B cell (primary cell): ENCODE measurements at regions of chr3 and their contacts with region 1.

Region 1: GRCh38 chr3:88003115-88003755 is 55.6 kb downstream of the CGGBP1 start:
- DNase-seq: peak; percentile 67
- ATAC-seq: no peak
- H3K4me3 ChIP-seq: no peak overlapping the region
- H3K4me3 Mint-ChIP-seq: no peak overlapping the region
- H3K27ac ChIP-seq: no peak overlapping the region
- H3K27ac Mint-ChIP-seq: no peak overlapping the region
- H3K4me1 ChIP-seq: peaks cover 0 to 2% of the 10 kb centered on the region in 2 donors
- H3K4me1 Mint-ChIP-seq: peaks cover 11% of the 10 kb centered on the region
- H3K27me3 ChIP-seq: no peaks in the 10 kb centered on the region
- H3K27me3 Mint-ChIP-seq: no peaks in the 10 kb centered on the region
- CTCF ChIP-seq: peak; percentile 78

Region 2: DNA sequence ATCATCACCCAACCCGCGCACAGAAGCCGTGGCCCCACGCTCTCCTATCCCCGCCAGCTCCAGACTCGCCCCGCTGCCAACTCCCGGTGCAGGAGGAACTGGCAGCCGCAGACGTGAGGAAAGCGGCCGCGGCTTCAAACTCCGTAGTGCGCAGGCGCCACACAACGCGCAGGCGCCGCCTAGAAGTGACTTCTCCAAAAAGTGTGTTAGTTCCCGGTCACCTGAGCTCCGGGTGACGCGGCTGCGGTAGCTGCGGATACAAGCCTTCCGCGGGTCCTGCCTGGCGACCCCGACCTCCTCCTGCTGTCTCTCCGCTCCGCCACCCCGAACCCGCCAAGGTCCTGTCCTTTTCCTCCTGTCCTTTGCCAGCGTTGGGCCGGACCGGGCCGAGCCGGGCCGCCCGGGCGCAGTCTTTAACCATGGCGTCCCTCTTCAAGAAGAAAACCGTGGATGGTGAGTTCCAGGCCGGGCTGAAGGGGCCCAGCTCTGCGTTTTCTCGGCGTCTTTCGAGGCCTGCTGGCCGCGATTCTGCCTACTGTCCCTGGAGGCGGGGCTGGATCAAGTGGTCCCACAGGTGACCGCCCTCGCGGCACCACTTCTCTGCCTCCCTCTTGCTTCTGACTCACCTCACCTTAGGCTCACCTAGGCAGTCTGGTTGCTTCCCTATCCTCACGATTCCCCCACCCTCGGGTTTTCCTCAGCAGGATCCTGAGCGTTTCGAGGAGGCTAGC is 776.0 kb before region 1 on chr3 and contains the start of gene CHMP2B:
- CTCF ChIA-PET with region 1: interaction called, 3 read pairs
- POLR2A ChIA-PET with region 1: no interaction called
- intact Hi-C with region 1: loop called (anchors 10 kb)
- DNase-seq: peak; percentile 96
- ATAC-seq: peak; percentile 87
- H3K4me3 ChIP-seq: peak within 1 kb of the TSS; percentile 42 to 99 (median 96)
- H3K4me3 Mint-ChIP-seq: peak within 1 kb of the TSS; percentile 97
- H3K27ac ChIP-seq: peak within 1 kb of the TSS; percentile 89 to 98
- H3K27ac Mint-ChIP-seq: peak within 1 kb of the TSS; percentile 97
- H3K4me1 ChIP-seq: peaks cover 13 to 16% of the 10 kb centered on the region in 2 donors
- H3K4me1 Mint-ChIP-seq: peaks cover 53% of the 10 kb centered on the region
- H3K27me3 ChIP-seq: peaks cover 0 to 7% (median 3%) of the 10 kb centered on the region in 4 experiments
- H3K27me3 Mint-ChIP-seq: peaks cover 14% of the 10 kb centered on the region
- CTCF ChIP-seq: no peak
- total RNA-seq, gene CHMP2B: 22.2 and 25.0 TPM in 2 replicates

Region 3: DNA sequence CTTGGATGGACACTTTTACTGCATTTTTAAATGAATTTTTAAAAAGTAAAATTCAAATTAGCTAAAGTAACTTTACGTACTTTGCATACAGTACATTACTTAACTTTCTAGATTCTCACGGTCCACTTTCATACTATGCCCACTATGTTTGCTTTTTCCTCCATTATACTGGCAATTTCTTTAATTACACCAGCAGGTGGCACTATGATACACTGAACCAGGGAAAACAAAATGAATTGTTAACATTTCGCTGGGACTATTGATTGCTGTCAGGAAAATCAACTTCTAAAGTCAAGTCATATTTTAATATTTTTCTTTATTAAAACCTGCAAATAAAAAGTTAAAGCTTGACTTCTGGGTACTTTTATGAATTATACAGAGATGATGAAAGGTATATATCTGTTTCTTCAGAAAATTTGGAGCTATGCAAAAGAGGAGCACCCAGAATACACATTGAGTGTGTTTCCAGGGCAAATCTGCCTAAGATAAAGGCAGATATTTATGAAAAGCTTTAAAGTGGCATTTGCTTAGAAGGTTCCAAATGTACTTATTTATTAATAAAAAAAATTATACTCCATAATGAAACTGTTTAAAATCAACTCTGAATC is 705.0 kb before region 1 on chr3:
- CTCF ChIA-PET with region 1: interaction called, 23 read pairs
- POLR2A ChIA-PET with region 1: no interaction called
- intact Hi-C with region 1: loop called (anchors 1 kb)
- DNase-seq: peak; percentile 38
- ATAC-seq: peak; percentile 62
- H3K4me3 ChIP-seq: no peak overlapping the region
- H3K4me3 Mint-ChIP-seq: no peak overlapping the region
- H3K27ac ChIP-seq: no peak overlapping the region
- H3K27ac Mint-ChIP-seq: no peak overlapping the region
- H3K4me1 ChIP-seq: no peaks in the 10 kb centered on the region
- H3K4me1 Mint-ChIP-seq: no peaks in the 10 kb centered on the region
- H3K27me3 ChIP-seq: no peaks in the 10 kb centered on the region
- H3K27me3 Mint-ChIP-seq: peaks cover 4% of the 10 kb centered on the region
- CTCF ChIP-seq: peak; percentile 90

Region 4: GRCh38 chr3:87771341-87772192 is 231.7 kb before region 1 on chr3:
- CTCF ChIA-PET with region 1: interaction called, 27 read pairs
- POLR2A ChIA-PET with region 1: no interaction called
- intact Hi-C with region 1: loop called (anchors 1 kb)
- DNase-seq: peak; percentile 59
- ATAC-seq: peak; percentile 70
- H3K4me3 ChIP-seq: no peak overlapping the region
- H3K4me3 Mint-ChIP-seq: no peak overlapping the region
- H3K27ac ChIP-seq: no peak overlapping the region
- H3K27ac Mint-ChIP-seq: no peak overlapping the region
- H3K4me1 ChIP-seq: no peaks in the 10 kb centered on the region
- H3K4me1 Mint-ChIP-seq: no peaks in the 10 kb centered on the region
- H3K27me3 ChIP-seq: no peaks in the 10 kb centered on the region
- H3K27me3 Mint-ChIP-seq: peaks cover 30% of the 10 kb centered on the region
- CTCF ChIP-seq: peak; percentile 76

Region 5: DNA sequence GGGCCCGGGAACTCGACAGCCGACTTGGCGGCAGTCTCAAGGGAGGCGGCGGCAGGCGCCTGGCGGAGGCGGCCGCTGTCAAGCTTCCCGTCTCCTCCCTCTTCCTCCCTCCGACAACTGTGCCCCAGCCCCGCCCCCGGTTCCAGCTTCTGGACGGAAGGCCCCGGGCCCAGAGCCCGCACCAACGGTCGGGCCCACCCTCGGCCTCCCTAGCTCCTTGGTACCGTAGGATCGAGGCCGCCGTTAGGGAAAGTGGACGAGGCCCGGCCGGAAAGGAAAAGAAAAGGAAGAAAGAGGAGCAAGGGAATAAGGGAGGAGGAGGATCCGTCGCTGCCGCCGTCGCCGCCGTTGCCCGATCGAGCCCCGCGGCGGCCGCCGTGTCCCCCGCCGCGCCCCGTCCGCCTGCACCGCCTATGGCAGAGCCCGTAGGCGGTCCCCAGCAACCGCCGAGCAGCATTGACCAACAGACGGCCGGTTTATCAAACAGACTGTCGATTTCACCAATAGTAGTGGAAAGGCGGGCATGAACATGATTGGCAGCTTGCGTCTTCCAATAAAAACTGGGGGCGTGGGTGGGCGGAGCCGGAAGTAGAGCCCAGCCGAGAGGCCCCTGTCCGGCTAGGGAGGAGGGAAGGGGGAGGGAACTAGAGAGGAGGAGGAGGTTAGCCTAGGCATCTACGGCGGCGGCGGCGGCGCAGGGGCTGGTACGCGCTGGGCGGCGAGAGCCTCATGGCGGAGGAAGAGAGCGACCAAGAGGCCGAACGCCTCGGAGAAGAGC is 55.5 kb after region 1 on chr3 and contains the starts of genes CGGBP1 and ZNF654:
- CTCF ChIA-PET with region 1: no interaction called
- POLR2A ChIA-PET with region 1: no interaction called
- intact Hi-C with region 1: loop called (anchors 2 kb)
- DNase-seq: peak; percentile 99
- ATAC-seq: peak; percentile 89
- H3K4me3 ChIP-seq: peak within 1 kb of the TSS; percentile 79 to 96 (median 87)
- H3K4me3 Mint-ChIP-seq: peak within 1 kb of the TSS; percentile 98
- H3K27ac ChIP-seq: peak within 1 kb of the TSS; percentile 86 to 89
- H3K27ac Mint-ChIP-seq: peak within 1 kb of the TSS; percentile 93
- H3K4me1 ChIP-seq: peaks cover 14 to 27% of the 10 kb centered on the region in 2 donors
- H3K4me1 Mint-ChIP-seq: peaks cover 53% of the 10 kb centered on the region
- H3K27me3 ChIP-seq: no peaks in the 10 kb centered on the region
- H3K27me3 Mint-ChIP-seq: no peaks in the 10 kb centered on the region
- CTCF ChIP-seq: no peak
- total RNA-seq, gene CGGBP1: 119 and 121 TPM in 2 replicates
- total RNA-seq, gene ZNF654: 19.5 and 22.1 TPM in 2 replicates